ENCODE measurements at regions of chr12 and their contacts with region 1.

Region 1: DNA sequence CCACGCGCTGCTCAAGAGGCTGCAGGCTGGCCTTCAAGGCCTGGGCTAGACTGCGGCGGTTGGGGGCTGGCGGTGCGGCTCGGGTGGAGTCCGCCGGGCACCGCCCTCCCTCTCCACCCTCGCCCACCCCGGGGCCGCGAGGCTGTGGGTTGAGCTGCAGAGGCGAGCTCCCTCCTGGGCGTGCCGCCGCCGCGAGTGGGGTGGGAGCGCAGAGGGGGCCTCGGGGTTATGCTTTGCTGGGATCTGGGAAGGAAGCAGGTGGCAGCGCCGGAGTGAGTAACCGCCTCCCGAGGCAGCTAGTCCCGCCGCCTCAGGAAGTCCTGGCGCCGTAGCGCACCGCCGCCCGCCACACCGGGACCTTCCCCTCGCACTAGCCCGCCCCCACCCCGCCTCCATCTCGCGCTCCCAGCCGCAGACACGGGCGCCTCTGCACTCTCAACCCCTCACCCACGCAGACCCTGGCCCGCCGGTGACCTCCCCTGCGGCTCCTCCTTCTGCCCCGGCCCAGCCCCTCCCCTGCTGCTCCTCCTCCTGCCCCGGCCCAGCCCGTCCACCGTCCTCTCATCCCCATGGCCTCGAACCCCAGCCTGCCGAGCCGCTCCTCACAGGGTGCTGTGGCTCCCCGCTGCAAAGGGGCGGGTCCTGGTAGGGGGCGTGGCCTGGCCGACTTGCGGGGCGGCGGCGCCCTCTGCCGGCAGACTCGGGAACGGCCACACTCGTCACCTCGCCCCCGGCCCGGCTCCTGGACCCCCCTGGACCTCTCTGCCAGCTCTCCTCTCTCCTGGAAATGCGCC is 16.6 kb downstream of the TAMALIN start:
- DNase-seq: no peak
- ATAC-seq: peak; percentile 72
- H3K4me3 ChIP-seq: peak overlapping the region; percentile 44; the same call in 1 of the 2 replicates
- H3K27ac ChIP-seq: no peak overlapping the region
- H3K4me1 ChIP-seq: peaks cover 21% of the 10 kb centered on the region
- H3K27me3 ChIP-seq: peaks cover 0 to 9% of the 10 kb centered on the region in 2 experiments; a peak in 2 of 4 replicates
- CTCF ChIP-seq: peak; percentile 91 to 97 (median 94); a peak in 5 of 6 replicates
- EP300 ChIP-seq: no peak
- POLR2A ChIP-seq: no peak
- RAD21 ChIP-seq: peak; percentile 65

Region 2: DNA sequence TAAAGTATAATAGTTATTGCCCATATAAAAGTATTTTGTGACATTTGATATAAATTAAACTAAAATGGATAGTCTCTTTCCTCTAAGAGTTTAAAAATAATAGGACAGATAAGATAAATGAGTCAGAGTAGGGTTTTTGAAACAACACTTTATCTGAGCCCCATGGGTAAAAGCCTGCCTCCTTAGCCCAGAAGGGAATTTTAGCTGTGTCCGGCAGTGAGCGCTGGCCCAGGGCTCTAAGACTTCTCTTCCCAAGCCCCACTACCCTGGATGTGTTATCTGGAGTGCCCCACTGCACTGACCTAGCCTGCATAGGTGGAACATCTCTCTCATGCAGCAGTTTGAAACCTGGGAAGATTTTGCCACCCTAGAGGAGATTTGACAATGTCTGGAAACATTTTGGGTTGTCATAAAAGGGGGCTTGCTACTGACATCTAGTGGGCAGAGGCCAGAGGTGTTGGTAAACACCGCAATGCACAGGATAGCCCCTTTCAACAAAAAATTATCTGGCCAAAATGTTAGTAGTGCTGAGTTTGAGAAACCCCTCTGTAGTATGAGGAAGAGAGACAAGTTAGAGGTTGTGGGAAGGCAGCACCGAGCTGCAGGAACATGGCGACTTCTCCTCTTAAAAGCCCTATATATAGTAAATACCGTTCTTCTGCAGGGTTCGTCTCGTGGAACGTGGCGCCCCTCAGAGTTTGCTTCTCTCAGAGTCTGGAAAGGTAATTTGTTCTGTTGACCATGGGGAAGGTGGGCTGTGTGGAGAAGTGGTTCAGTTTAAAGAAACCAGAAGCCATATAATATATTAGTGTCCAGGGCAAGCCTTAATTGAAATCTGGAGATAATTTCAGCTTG is 1288.7 kb before region 1 on chr12:
- CTCF ChIA-PET with region 1: no interaction called
- POLR2A ChIA-PET with region 1: no interaction called
- RAD21 ChIA-PET with region 1: no interaction called
- SMC1A ChIA-PET with region 1: no interaction called
- in situ Hi-C with region 1: no loop called
- intact Hi-C with region 1: no loop called
- DNase-seq: no peak
- ATAC-seq: peak; percentile 76
- H3K4me3 ChIP-seq: no peak overlapping the region
- H3K27ac ChIP-seq: no peak overlapping the region
- H3K4me1 ChIP-seq: no peaks in the 10 kb centered on the region
- H3K27me3 ChIP-seq: no peaks in the 10 kb centered on the region
- CTCF ChIP-seq: peak; percentile 58 to 64 (median 63)
- EP300 ChIP-seq: no peak
- POLR2A ChIP-seq: no peak
- RAD21 ChIP-seq: peak; percentile 65

Region 3: DNA sequence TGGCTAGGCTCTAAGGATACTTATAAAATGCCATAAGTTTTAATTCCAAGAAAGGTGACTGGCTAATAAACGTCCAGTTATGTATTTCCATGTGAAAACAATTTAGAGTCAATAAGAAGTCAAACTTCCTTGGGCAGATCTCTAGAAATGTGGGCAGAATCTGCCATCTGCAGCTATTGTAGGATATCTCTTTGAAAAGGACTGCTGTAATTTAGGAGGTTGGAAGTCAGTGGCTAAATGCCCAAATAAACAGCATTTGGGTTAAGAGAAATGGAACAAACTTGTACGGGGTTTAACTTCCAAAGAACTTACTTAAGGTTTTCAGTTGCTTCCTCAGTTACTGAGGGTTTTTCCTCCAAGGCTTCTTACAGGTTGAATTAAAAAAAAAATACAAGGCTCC is 296.4 kb before region 1 on chr12:
- CTCF ChIA-PET with region 1: no interaction called
- POLR2A ChIA-PET with region 1: no interaction called
- RAD21 ChIA-PET with region 1: no interaction called
- SMC1A ChIA-PET with region 1: no interaction called
- in situ Hi-C with region 1: no loop called
- intact Hi-C with region 1: no loop called
- DNase-seq: no peak
- ATAC-seq: no peak
- H3K4me3 ChIP-seq: no peak overlapping the region
- H3K27ac ChIP-seq: no peak overlapping the region
- H3K4me1 ChIP-seq: no peaks in the 10 kb centered on the region
- H3K27me3 ChIP-seq: peaks cover 0 to 4% of the 10 kb centered on the region in 2 experiments; a peak in 2 of 4 replicates
- CTCF ChIP-seq: no peak
- EP300 ChIP-seq: no peak
- POLR2A ChIP-seq: no peak
- RAD21 ChIP-seq: no peak

Region 4: GRCh38 chr12:51798501-51798900 is 224.9 kb before region 1 on chr12:
- CTCF ChIA-PET with region 1: no interaction called
- POLR2A ChIA-PET with region 1: no interaction called
- RAD21 ChIA-PET with region 1: no interaction called
- SMC1A ChIA-PET with region 1: no interaction called
- in situ Hi-C with region 1: no loop called
- intact Hi-C with region 1: no loop called
- DNase-seq: no peak
- ATAC-seq: no peak
- H3K4me3 ChIP-seq: no peak overlapping the region
- H3K27ac ChIP-seq: no peak overlapping the region
- H3K4me1 ChIP-seq: no peaks in the 10 kb centered on the region
- H3K27me3 ChIP-seq: peaks cover 0 to 2% of the 10 kb centered on the region in 2 experiments; a peak in 1 of 4 replicates
- CTCF ChIP-seq: no peak
- EP300 ChIP-seq: no peak
- POLR2A ChIP-seq: no peak
- RAD21 ChIP-seq: no peak

Region 5: DNA sequence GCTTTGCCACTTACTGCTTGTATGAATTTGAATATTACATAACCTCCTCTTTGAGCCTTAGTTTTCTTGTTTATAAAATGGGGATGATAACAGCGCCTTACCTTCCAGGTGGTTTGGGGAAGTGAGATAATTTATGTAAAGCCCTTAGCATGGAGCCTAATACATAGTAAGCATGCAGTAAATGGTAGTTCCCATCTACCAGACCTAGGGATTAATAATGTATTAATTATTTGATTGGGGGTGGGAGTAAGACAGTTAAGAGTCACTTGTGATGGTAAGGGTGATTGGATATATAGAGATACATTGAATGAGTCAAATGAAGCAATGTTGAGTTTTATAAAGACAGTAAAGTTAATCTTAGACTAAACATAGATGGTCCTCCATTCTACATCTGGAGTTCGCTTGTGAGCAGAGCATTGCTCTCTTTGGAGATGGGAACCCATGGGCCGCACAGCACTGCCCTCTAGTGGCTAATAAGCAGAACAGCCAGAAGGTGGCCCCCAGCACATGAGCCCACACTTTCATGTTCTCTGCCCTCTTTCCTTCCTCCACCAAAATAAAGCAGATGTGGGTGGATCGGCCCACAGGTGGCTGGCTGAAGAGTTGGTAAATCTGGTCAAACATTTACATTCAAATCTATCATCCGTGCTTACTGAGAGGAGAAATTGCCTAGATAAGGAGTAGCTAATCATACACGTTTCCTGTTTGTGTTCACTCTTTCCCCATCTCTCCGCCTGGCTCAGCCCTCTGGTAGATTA is 43.1 kb before region 1 on chr12:
- CTCF ChIA-PET with region 1: interaction called, 14 read pairs
- POLR2A ChIA-PET with region 1: interaction called, 3 read pairs
- RAD21 ChIA-PET with region 1: interaction called, 3 read pairs
- SMC1A ChIA-PET with region 1: interaction called, 4 read pairs
- in situ Hi-C with region 1: no loop called
- intact Hi-C with region 1: loop called (anchors 5 kb)
- DNase-seq: no peak
- ATAC-seq: peak; percentile 98
- H3K4me3 ChIP-seq: no peak overlapping the region
- H3K27ac ChIP-seq: no peak overlapping the region
- H3K4me1 ChIP-seq: no peaks in the 10 kb centered on the region; the same call in 1 of the 2 replicates
- H3K27me3 ChIP-seq: peaks cover 0 to 11% of the 10 kb centered on the region in 2 experiments; a peak in 2 of 4 replicates
- CTCF ChIP-seq: peak; percentile 95 to 97 (median 96)
- EP300 ChIP-seq: no peak
- POLR2A ChIP-seq: no peak
- RAD21 ChIP-seq: peak; percentile 90

Region 6: GRCh38 chr12:52010152-52010622 is 13.2 kb before region 1 on chr12:
- CTCF ChIA-PET with region 1: interaction called, 412 read pairs
- POLR2A ChIA-PET with region 1: interaction called, 4 read pairs
- RAD21 ChIA-PET with region 1: interaction called, 131 read pairs
- SMC1A ChIA-PET with region 1: interaction called, 92 read pairs
- in situ Hi-C with region 1: no loop called
- intact Hi-C with region 1: no loop called
- DNase-seq: no peak
- ATAC-seq: no peak
- H3K4me3 ChIP-seq: no peak overlapping the region
- H3K27ac ChIP-seq: no peak overlapping the region
- H3K4me1 ChIP-seq: peaks cover 11% of the 10 kb centered on the region
- H3K27me3 ChIP-seq: peaks cover 9 to 20% of the 10 kb centered on the region in 2 experiments; a peak in 3 of 4 replicates
- CTCF ChIP-seq: no peak
- EP300 ChIP-seq: no peak
- POLR2A ChIP-seq: no peak
- RAD21 ChIP-seq: no peak

Region 7: DNA sequence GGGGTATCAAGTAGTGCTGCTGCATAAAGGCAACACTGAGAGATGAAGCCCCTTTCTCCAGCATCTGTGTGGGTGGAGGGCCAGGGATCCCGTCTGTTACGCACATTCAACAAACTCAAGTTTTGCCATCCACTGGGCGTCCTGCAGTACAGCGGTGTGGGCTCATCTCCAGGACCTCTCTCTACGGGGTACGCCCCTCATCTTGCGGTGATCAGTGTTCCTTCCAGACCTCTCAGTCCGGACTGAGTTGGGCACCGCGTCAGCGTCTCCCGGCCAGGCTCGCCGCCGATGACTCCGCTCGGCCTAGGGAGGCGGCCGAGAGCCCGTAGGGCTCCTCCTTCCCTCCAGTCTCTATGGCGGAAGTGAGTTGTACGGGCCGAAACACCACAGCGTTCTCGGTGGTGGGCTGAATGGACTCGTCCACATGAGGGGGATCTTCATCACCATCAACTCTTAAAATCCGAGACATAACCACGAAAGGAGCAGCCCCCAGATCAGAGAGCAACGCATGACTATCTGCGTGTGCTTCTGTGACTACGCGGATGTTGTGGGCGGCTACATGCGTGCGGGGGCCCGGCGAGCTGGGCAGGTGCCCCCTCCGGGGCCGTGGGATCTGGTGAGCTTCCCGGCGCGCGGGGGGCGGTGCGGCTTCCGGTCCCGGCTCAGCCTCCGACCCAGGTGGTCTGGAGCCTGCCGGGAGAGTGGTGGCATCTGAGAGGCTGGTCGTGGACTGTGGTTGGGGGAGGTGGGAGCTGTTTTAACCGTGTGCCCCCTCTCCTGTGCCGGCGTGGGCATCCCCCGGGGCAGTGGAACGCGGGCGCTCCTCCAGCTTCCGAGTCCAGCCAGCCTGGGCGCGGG is 46.2 kb after region 1 on chr12 and contains the start of gene ATG101:
- CTCF ChIA-PET with region 1: interaction called, 208 read pairs
- POLR2A ChIA-PET with region 1: interaction called, 7 read pairs
- RAD21 ChIA-PET with region 1: interaction called, 35 read pairs
- SMC1A ChIA-PET with region 1: interaction called, 46 read pairs
- in situ Hi-C with region 1: no loop called
- intact Hi-C with region 1: loop called (anchors 1 kb)
- DNase-seq: peak; percentile 73
- ATAC-seq: peak; percentile 93
- H3K4me3 ChIP-seq: peak within 1 kb of the TSS; percentile 98
- H3K27ac ChIP-seq: peak within 1 kb of the TSS; percentile 95
- H3K4me1 ChIP-seq: peaks cover 13% of the 10 kb centered on the region
- H3K27me3 ChIP-seq: no peaks in the 10 kb centered on the region; a peak in 1 of 4 replicates
- CTCF ChIP-seq: peak; percentile 91 to 96 (median 95)
- EP300 ChIP-seq: peak; percentile 52 to 56; a peak in 2 of 4 replicates
- POLR2A ChIP-seq: peak; percentile 94
- RAD21 ChIP-seq: no peak; the same call in 1 of the 2 replicates
- polyA plus RNA-seq, gene ATG101: 2.7 to 5.6 TPM

Region 8: DNA sequence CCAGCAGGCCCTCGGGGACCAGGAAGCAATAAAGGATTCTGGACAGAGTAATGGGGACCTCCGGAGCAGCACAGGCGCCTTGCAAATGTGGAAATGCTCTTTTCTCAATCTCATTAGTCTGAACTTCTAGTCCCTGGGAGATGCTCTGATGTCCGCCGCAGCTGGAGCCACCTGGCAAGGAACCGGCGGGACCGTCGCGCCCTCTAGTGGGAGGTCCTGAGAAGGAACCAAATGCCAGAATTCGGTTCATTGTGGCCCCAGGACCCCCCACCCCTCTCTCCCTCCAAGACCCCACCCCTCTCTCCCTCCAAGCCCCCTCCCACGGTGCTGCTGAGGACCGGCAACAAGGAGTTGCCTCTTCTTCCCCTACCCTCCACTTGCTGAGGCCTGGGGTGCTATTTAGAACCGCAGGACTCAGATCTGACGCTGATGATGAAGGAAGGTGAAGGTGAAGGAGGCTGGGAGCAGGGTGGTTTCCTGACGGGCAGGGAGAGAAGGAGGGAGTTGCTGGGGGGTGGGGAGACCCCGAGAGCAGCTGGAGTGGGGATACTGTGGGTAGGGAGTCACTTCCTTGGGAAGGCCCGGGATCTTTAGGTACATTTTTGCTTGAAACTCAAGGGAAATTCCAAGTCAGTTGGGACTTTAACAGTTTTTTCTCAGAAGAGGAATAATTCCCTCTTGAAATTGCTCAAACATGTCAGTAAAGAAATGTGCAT is 98.6 kb after region 1 on chr12:
- CTCF ChIA-PET with region 1: interaction called, 395 read pairs
- POLR2A ChIA-PET with region 1: interaction called, 20 read pairs
- RAD21 ChIA-PET with region 1: interaction called, 151 read pairs
- SMC1A ChIA-PET with region 1: interaction called, 320 read pairs
- in situ Hi-C with region 1: loop called (anchors 5 kb)
- intact Hi-C with region 1: loop called (anchors 1 kb)
- DNase-seq: no peak
- ATAC-seq: peak; percentile 12
- H3K4me3 ChIP-seq: no peak overlapping the region
- H3K27ac ChIP-seq: peak overlapping the region; percentile 72
- H3K4me1 ChIP-seq: peaks cover 50% of the 10 kb centered on the region
- H3K27me3 ChIP-seq: no peaks in the 10 kb centered on the region
- CTCF ChIP-seq: peak; percentile 66 to 89 (median 78)
- EP300 ChIP-seq: no peak
- POLR2A ChIP-seq: no peak
- RAD21 ChIP-seq: peak; percentile 82

Region 9: GRCh38 chr12:52167954-52168717 is 144.8 kb after region 1 on chr12:
- CTCF ChIA-PET with region 1: no interaction called
- POLR2A ChIA-PET with region 1: no interaction called
- RAD21 ChIA-PET with region 1: no interaction called
- SMC1A ChIA-PET with region 1: no interaction called
- in situ Hi-C with region 1: no loop called
- intact Hi-C with region 1: no loop called
- DNase-seq: no peak
- ATAC-seq: peak; percentile 82
- H3K4me3 ChIP-seq: no peak overlapping the region
- H3K27ac ChIP-seq: no peak overlapping the region
- H3K4me1 ChIP-seq: peaks cover 6% of the 10 kb centered on the region
- H3K27me3 ChIP-seq: no peaks in the 10 kb centered on the region
- CTCF ChIP-seq: no peak
- EP300 ChIP-seq: no peak
- POLR2A ChIP-seq: no peak
- RAD21 ChIP-seq: no peak